ENCODE measurements at regions of chr7 and their contacts with region 1.

Region 1: GRCh38 chr7:98021588-98022351 is 31.8 kb upstream of the OCM2 start:
- DNase-seq: peak; percentile 70 to 80
- ATAC-seq: peak; percentile 93 to 96
- H3K4me3 ChIP-seq: no peak overlapping the region
- H3K27ac ChIP-seq: no peak overlapping the region
- H3K4me1 ChIP-seq: no peaks in the 10 kb centered on the region
- CTCF ChIP-seq: peak; percentile 94
- EP300 ChIP-seq: no peak
- POLR2A ChIP-seq: no peak
- RAD21 ChIP-seq: peak; percentile 94

Region 2: GRCh38 chr7:98000356-98000755 is 21.4 kb before region 1 on chr7:
- CTCF ChIA-PET with region 1: interaction called, 10 read pairs
- POLR2A ChIA-PET with region 1: no interaction called
- DNase-seq: no peak
- ATAC-seq: no peak
- H3K4me3 ChIP-seq: no peak overlapping the region
- H3K27ac ChIP-seq: no peak overlapping the region
- H3K4me1 ChIP-seq: no peaks in the 10 kb centered on the region
- CTCF ChIP-seq: no peak
- EP300 ChIP-seq: no peak
- POLR2A ChIP-seq: no peak
- RAD21 ChIP-seq: no peak

Region 3: DNA sequence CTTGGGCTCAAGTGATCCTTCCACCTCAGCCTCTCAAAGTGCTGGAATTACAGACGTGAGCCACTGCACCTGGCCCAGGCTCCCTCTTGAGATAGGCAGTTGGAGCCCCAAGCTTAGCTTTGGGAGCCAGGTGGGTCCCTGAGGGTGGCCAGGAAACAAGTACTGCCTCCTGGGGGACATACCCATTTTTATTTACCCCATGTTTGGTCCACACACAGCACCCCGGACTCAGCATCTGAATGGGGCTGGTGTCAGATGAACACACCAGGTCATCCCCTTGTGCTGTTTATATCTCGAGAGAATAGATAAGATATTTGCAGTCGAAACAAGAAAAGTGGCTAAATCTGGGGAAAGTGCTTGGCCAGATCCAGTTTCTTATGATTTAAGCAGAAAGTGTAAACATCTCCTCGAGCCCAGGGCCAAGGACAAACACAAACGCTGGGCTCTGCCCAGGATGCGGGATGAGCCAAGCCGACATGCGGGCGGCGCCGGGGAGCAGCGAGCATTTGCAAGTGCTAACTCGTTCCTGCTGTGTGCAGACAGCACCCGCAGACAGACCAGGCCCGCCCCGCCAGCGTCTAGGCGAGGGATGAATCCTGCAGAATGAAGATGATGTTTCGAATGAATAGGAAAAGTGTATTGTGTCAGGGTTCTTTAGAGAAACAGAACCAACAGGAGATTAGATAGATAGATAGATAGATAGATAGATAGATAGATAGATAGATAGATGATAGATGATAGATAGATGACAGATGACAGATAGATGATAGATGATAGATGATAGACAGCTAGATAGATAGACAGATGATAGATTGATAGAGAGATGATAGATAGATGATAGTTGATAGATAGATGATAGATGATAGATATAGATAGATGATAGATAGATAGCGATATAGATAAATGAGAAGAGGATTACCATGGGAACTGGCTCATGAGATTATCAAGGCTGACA is 12.6 kb after region 1 on chr7:
- CTCF ChIA-PET with region 1: interaction called, 42 read pairs
- POLR2A ChIA-PET with region 1: interaction called, 3 read pairs
- DNase-seq: no peak
- ATAC-seq: no peak
- H3K4me3 ChIP-seq: no peak overlapping the region
- H3K27ac ChIP-seq: no peak overlapping the region
- H3K4me1 ChIP-seq: no peaks in the 10 kb centered on the region
- CTCF ChIP-seq: no peak
- EP300 ChIP-seq: no peak
- POLR2A ChIP-seq: no peak
- RAD21 ChIP-seq: no peak

Region 4: DNA sequence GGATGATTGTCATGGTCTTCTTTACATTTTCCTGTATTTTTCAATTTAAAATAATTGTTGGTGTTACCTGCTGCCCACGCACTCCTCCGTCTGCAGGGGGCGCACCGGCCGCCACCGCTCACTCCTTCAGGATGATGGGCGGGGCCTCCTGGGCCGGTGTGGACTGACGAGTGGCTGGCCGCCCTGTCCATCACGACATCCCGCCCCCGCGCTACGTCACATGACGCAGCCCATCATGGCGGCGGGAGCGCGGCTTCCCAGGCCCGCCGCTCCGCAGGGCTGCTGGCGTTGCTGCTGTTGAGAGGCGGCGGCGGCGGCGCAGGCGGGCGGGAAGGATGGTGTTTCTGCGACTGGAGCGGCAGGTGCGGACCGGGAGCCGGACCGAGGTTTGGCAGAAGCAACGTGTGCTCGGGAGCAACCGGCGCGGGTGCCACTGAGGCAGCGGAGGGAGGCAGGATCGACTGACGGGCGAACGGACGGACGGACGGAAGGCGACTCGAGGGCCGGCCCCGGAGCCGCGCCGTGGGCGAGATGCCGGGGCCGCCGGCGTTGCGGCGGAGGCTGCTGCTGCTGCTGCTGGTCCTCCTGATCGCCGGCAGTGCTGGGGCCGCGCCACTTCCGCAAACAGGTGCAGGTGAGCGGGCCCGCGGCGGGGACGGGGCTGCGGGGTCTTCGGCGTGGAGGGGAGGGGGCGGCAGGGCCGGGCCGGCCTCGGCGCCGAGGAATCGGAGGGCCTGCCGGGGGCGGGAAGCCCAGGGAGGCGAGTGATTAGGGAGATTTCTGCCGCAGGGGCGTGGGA is 85.1 kb after region 1 on chr7 and contains the start of gene LMTK2:
- CTCF ChIA-PET with region 1: interaction called, 34 read pairs
- POLR2A ChIA-PET with region 1: no interaction called
- DNase-seq: peak; percentile 77 to 93
- ATAC-seq: peak; percentile 97 to 98
- H3K4me3 ChIP-seq: peak within 1 kb of the TSS; percentile 90
- H3K27ac ChIP-seq: peak within 1 kb of the TSS; percentile 86 to 91
- H3K4me1 ChIP-seq: peaks cover 39% of the 10 kb centered on the region
- CTCF ChIP-seq: peak; percentile 94
- EP300 ChIP-seq: no peak
- POLR2A ChIP-seq: peak; percentile 92
- RAD21 ChIP-seq: peak; percentile 66 to 74
- polyA plus RNA-seq, gene LMTK2: 13.0 and 14.9 TPM in 2 replicates

Region 5: DNA sequence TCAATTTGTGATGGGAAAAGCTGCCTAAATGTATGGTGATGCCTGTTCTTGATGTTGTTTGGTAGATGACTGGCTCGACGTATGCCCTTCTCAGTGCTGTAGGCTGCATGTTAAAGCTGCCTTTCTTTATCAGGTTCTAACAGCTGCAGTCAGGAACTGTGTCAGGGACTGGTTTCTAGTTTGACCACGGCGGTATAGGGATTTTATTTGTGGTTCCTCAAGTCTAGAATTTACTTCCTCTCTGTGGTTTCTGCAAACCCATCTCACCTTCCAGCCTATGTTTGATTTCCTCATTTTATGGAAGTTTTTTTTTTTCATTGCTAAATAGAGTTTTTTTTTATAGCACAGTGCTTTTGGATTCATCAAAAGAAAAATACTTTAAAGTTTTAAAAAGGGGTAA is 111.4 kb after region 1 on chr7:
- CTCF ChIA-PET with region 1: interaction called, 16 read pairs
- POLR2A ChIA-PET with region 1: no interaction called
- DNase-seq: no peak
- ATAC-seq: no peak
- H3K4me3 ChIP-seq: no peak overlapping the region
- H3K27ac ChIP-seq: peak overlapping the region; percentile 55 to 84
- H3K4me1 ChIP-seq: peaks cover 60% of the 10 kb centered on the region
- CTCF ChIP-seq: no peak
- EP300 ChIP-seq: no peak
- POLR2A ChIP-seq: no peak
- RAD21 ChIP-seq: no peak

Region 6: GRCh38 chr7:98156700-98157099 is 134.9 kb after region 1 on chr7:
- CTCF ChIA-PET with region 1: interaction called, 493 read pairs
- POLR2A ChIA-PET with region 1: no interaction called
- DNase-seq: no peak
- ATAC-seq: no peak
- H3K4me3 ChIP-seq: no peak overlapping the region
- H3K27ac ChIP-seq: no peak overlapping the region
- H3K4me1 ChIP-seq: no peaks in the 10 kb centered on the region
- CTCF ChIP-seq: no peak
- EP300 ChIP-seq: no peak
- POLR2A ChIP-seq: no peak
- RAD21 ChIP-seq: no peak

Region 7: DNA sequence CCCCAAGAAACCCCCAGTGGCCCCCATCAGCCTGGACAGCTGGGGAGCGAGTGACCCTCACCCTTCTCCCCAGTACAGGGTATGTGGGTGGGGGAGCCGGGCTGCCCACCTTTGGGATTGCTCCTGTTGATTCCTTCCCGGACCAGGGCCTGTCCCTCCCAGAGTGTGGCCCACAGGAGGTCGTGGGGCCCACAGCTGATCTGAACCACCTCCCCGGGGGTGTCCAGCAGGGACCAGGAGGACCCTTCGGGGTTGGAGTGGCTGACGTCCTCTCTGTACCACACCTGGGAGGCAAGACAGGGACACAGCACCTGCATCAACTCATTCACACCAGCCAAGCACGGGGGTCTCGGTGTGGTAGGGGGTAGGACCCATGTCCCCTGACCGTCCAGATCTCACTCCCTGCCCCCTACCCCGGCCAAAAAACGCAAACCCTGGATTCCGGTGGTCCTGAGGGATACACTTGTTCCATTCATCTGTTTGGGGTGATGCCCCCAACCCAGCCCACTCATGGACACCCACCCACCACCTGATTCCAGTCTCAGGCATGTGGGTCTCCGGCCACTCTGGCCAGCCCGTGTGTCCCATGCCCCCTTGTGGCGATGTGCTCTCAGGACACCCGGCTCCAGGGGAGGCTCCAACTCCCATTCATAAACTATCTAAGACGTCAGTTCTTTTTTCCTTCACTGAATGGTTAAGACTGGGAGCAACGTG is 219.3 kb after region 1 on chr7:
- CTCF ChIA-PET with region 1: interaction called, 10 read pairs
- POLR2A ChIA-PET with region 1: no interaction called
- DNase-seq: peak; percentile 51 to 81
- ATAC-seq: peak; percentile 75 to 89
- H3K4me3 ChIP-seq: no peak overlapping the region
- H3K27ac ChIP-seq: no peak overlapping the region
- H3K4me1 ChIP-seq: no peaks in the 10 kb centered on the region
- CTCF ChIP-seq: peak; percentile 62
- EP300 ChIP-seq: no peak
- POLR2A ChIP-seq: no peak
- RAD21 ChIP-seq: peak; percentile 49 to 70

Region 8: DNA sequence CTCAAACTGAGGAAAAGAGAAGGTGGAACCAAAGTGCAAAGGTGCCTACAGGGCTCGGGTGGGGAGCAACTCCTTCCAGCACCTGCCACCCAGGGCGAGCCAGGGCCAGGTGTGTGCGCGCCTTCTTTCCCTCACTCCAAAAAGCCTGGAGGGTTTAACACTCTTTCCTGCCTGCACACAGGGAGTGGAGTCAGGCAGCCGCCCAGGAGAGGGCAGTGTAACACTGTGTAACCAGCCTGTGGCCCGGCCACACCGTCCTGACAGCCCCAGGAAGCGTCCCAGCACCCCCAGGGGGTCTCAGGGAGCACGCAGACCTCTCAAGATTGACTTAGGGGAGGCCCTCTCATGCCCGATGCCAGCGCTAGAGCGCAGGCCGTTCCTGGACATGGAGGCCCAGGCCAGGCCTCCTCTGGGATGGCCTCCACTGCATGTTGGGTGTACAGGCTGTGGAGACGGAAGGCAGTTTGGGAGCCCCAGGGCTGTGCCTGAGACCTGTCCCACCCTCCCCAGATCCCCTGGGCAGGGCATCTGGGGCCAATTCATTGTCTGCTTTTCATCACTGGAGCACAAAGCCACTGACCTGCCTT is 273.1 kb after region 1 on chr7:
- CTCF ChIA-PET with region 1: no interaction called
- POLR2A ChIA-PET with region 1: no interaction called
- DNase-seq: peak; percentile 75 to 85
- ATAC-seq: peak; percentile 82 to 90
- H3K4me3 ChIP-seq: no peak overlapping the region
- H3K27ac ChIP-seq: peak overlapping the region; percentile 40 to 81
- H3K4me1 ChIP-seq: peaks cover 13% of the 10 kb centered on the region
- CTCF ChIP-seq: peak; percentile 90
- EP300 ChIP-seq: no peak
- POLR2A ChIP-seq: no peak
- RAD21 ChIP-seq: peak; percentile 93 to 96